Mammary epithelial cell (primary cell): ENCODE measurements at regions of chr18 and their contacts with region 1.

Region 1: GRCh38 chr18:48767090-48767690 is 183.6 kb downstream of the SMAD7 start:
- DNase-seq: no peak
- H3K4me3 ChIP-seq: no peak overlapping the region
- H3K27ac ChIP-seq: no peak overlapping the region
- H3K4me1 ChIP-seq: peaks cover 9% of the 10 kb centered on the region
- H3K27me3 ChIP-seq: no peaks in the 10 kb centered on the region
- CTCF ChIP-seq: no peak

Region 2: GRCh38 chr18:48698707-48699106 is 68.5 kb before region 1 on chr18:
- CTCF ChIA-PET with region 1: no interaction called
- dilution Hi-C with region 1: loop called (anchors 5 kb)
- in situ Hi-C with region 1: no loop called
- intact Hi-C with region 1: no loop called
- DNase-seq: no peak
- H3K4me3 ChIP-seq: no peak overlapping the region
- H3K27ac ChIP-seq: no peak overlapping the region
- H3K4me1 ChIP-seq: no peaks in the 10 kb centered on the region
- H3K27me3 ChIP-seq: no peaks in the 10 kb centered on the region
- CTCF ChIP-seq: no peak

Region 3: DNA sequence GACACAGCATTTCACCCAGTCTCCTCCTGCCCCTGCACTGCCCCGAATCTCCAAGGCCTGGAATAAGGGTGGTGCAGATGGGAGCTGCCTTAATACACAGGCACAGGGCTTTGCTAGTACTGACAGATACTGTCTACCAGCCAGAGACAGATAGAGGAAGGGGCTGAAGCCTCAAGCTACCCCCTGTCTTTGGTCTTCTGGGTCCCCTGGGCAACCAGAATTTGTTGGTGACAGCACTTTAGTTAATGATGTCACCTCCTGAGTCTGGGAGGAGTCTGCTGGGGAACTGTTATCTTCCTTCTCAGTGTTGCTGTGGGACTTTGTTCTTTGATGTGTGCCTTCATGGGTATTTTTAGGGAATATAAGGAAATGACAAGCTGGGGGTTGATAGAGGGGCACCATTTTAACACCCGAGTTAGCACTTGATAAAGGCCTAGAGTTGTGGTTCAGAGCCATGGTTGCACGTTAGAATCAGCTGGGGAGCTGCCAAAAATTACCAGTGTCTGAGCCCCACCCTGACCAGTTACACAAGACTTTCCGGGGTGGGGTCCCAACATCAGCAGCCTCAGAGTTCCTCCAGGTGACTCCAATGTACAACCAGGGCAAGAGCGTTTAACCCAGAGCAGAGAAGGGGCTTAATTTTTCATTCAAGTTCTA is 46.8 kb after region 1 on chr18:
- CTCF ChIA-PET with region 1: no interaction called
- dilution Hi-C with region 1: no loop called
- in situ Hi-C with region 1: no loop called
- intact Hi-C with region 1: no loop called
- DNase-seq: no peak
- H3K4me3 ChIP-seq: no peak overlapping the region
- H3K27ac ChIP-seq: no peak overlapping the region
- H3K4me1 ChIP-seq: peaks cover 6% of the 10 kb centered on the region
- H3K27me3 ChIP-seq: no peaks in the 10 kb centered on the region
- CTCF ChIP-seq: no peak

Region 4: DNA sequence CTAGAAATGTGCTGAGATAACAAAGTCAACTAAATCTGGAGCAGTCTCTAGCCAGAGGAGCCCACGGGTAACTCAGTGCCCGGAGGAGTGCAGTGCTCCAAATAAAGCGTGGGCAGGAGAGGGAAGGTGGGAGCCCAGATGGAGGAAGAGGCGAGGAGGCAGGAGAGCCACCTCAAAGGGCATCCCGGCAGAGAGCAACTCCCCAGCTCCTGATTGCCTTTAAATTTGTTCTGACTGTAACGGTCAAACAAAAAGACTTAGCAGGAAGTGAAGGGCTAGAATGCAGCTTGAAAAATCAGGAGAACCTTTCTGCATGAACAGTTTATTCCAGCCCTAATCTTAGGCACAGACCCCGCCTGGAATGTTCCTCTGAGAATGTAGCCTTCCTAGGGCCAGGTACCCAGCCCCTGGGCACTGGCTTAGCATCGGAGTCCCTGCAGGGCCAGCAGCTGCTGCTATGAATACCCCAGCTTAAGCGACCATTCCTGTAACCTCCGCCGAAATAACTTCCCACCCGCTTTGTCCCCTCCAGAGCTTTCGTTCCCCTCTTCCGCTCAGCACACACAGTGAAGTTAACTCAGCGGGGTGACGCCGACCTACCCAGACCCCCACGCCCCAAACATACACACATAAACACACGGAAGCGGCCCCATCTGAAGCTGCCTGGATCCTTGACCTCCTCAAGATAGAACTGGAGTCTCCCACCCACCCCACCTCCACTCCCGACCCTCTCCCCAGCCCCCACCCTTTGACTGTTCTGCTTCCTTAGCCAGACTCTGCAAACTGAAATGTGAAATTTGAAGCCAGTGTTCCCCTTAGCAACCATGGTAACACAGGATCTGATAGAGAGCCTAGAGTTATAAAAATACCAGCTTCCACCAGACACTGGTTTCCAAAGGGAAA is 60.4 kb after region 1 on chr18:
- CTCF ChIA-PET with region 1: no interaction called
- dilution Hi-C with region 1: loop called (anchors 5 kb)
- in situ Hi-C with region 1: no loop called
- intact Hi-C with region 1: no loop called
- DNase-seq: no peak
- H3K4me3 ChIP-seq: no peak overlapping the region
- H3K27ac ChIP-seq: no peak overlapping the region
- H3K4me1 ChIP-seq: peaks cover 17% of the 10 kb centered on the region
- H3K27me3 ChIP-seq: no peaks in the 10 kb centered on the region
- CTCF ChIP-seq: no peak